ENCODE measurements at regions of chr4 and their contacts with region 1.

Region 1: DNA sequence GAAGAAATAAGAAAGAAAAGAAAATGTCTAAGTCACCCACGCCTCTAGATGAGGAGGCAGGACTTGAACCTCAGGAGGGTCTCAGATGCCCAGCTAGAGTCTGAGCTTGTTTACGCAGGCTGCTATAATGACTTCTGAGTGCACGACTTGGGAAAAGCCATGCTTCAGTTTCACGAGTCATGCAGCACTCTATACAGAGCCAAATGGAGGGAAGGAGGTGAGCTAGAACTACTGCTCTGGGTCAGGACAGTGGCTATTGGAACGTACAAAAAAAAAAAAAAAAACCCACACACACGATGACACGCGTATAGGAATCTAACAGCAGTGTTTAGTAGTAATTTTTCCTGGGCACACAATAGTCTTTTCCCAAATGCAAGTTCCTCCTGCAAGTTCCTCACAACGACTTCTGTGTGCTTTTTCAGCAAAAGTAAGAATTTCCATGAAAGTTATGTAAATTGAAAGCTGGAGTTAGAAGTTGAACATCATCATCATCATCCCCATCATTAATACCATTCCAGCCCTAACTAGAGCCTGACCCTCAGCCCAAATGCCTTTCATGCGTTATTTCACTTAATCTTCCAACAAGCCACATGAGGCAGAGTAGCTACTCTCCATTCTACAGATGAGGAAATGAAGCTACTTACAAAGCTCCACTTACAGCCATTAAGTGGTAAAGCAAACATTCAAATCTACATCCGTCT is 36.6 kb downstream of the IRF2 start:
- DNase-seq: no peak
- H3K4me3 Mint-ChIP-seq: no peak overlapping the region
- H3K27ac Mint-ChIP-seq: peak overlapping the region; percentile 31
- H3K4me1 Mint-ChIP-seq: peaks cover 62% of the 10 kb centered on the region
- H3K27me3 Mint-ChIP-seq: no peaks in the 10 kb centered on the region

Region 2: GRCh38 chr4:184453365-184454160 is 15.8 kb after region 1 on chr4:
- intact Hi-C with region 1: loop called (anchors 2 kb)
- DNase-seq: peak; percentile 37
- H3K4me3 Mint-ChIP-seq: peak overlapping the region; percentile 40
- H3K27ac Mint-ChIP-seq: peak overlapping the region; percentile 82
- H3K4me1 Mint-ChIP-seq: peaks cover 75% of the 10 kb centered on the region
- H3K27me3 Mint-ChIP-seq: no peaks in the 10 kb centered on the region

Region 3: GRCh38 chr4:185179488-185179887 is 741.8 kb after region 1 on chr4:
- intact Hi-C with region 1: no loop called
- DNase-seq: no peak
- H3K4me3 Mint-ChIP-seq: no peak overlapping the region
- H3K27ac Mint-ChIP-seq: no peak overlapping the region
- H3K4me1 Mint-ChIP-seq: peaks cover 21% of the 10 kb centered on the region
- H3K27me3 Mint-ChIP-seq: no peaks in the 10 kb centered on the region